ENCODE measurements at regions of chr12 and their contacts with region 1.

Region 1: GRCh38 chr12:91811481-91812287 is 334.0 kb downstream of the BTG1 start:
- DNase-seq: peak; percentile 64 to 73 (median 67)
- H3K4me3 ChIP-seq: no peak overlapping the region
- H3K4me3 Mint-ChIP-seq: peak overlapping the region in 5 of 8 donors; percentile 2 to 57 (median 44)
- H3K27ac ChIP-seq: no peak overlapping the region
- H3K27ac Mint-ChIP-seq: peak overlapping the region; percentile 7 to 92 (median 84)
- H3K4me1 ChIP-seq: peaks cover 8% of the 10 kb centered on the region
- H3K4me1 Mint-ChIP-seq: peaks cover 4 to 13% (median 12%) of the 10 kb centered on the region in 4 donors
- H3K27me3 ChIP-seq: no peaks in the 10 kb centered on the region
- H3K27me3 Mint-ChIP-seq: no peaks in the 10 kb centered on the region

Region 2: GRCh38 chr12:91603060-91603459 is 208.6 kb before region 1 on chr12:
- CTCF ChIA-PET with region 1: no interaction called
- POLR2A ChIA-PET with region 1: no interaction called
- intact Hi-C with region 1: no loop called
- DNase-seq: no peak
- H3K4me3 ChIP-seq: no peak overlapping the region
- H3K4me3 Mint-ChIP-seq: no peak overlapping the region
- H3K27ac ChIP-seq: no peak overlapping the region
- H3K27ac Mint-ChIP-seq: no peak overlapping the region
- H3K4me1 ChIP-seq: no peaks in the 10 kb centered on the region
- H3K4me1 Mint-ChIP-seq: peaks cover 0 to 2% (median 0%) of the 10 kb centered on the region in 4 donors
- H3K27me3 ChIP-seq: no peaks in the 10 kb centered on the region
- H3K27me3 Mint-ChIP-seq: peaks cover 0 to 3% of the 10 kb centered on the region in 2 donors

Region 3: GRCh38 chr12:91640021-91640420 is 171.7 kb before region 1 on chr12:
- CTCF ChIA-PET with region 1: no interaction called
- POLR2A ChIA-PET with region 1: no interaction called
- intact Hi-C with region 1: no loop called
- DNase-seq: no peak
- H3K4me3 ChIP-seq: no peak overlapping the region
- H3K4me3 Mint-ChIP-seq: no peak overlapping the region
- H3K27ac ChIP-seq: no peak overlapping the region
- H3K27ac Mint-ChIP-seq: no peak overlapping the region
- H3K4me1 ChIP-seq: no peaks in the 10 kb centered on the region
- H3K4me1 Mint-ChIP-seq: no peaks in the 10 kb centered on the region
- H3K27me3 ChIP-seq: no peaks in the 10 kb centered on the region
- H3K27me3 Mint-ChIP-seq: peaks cover 0 to 1% of the 10 kb centered on the region in 2 donors

Region 4: DNA sequence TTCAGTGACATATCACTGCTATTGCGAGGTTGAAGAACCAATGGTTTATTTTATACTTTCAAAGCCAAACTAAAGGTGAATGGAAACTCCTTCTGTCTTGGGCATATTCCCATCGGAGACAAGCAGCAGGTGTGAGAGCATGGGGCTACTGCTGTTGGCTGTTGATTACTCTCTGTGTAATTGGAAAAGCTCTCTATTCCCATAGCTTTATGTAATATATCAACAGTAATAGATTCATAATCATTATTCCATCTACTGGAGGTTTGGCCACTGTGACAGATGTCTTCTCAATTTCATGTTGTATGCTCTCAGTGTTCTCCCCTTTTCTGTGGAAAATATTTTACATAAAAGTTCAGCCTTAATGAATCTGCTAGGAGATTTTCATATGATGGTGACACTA is 18.0 kb before region 1 on chr12:
- CTCF ChIA-PET with region 1: interaction called, 22 read pairs
- POLR2A ChIA-PET with region 1: no interaction called
- intact Hi-C with region 1: no loop called
- DNase-seq: no peak
- H3K4me3 ChIP-seq: no peak overlapping the region
- H3K4me3 Mint-ChIP-seq: no peak overlapping the region
- H3K27ac ChIP-seq: no peak overlapping the region
- H3K27ac Mint-ChIP-seq: no peak overlapping the region
- H3K4me1 ChIP-seq: no peaks in the 10 kb centered on the region
- H3K4me1 Mint-ChIP-seq: peaks cover 0 to 1% (median 0%) of the 10 kb centered on the region in 4 donors
- H3K27me3 ChIP-seq: no peaks in the 10 kb centered on the region
- H3K27me3 Mint-ChIP-seq: no peaks in the 10 kb centered on the region

Region 5: DNA sequence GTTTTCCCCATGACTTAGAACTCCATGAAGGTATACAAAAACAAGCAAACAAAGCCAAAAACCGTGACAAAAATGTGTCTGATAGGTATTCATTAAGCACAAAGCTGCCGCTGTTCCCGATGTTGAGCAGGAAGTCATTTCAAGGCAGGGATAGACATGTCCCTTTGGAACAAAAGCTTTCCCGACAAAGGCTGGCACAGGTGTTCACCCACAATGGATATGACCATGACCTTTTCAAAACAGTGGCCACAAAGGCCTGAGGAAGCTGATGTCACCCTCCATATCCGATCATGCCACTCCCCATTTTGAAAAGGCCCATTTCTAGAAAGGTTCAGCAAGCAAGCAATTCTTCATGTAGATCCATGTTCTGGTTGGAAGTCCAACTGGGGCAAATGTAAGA is 54.9 kb after region 1 on chr12:
- CTCF ChIA-PET with region 1: interaction called, 14 read pairs
- POLR2A ChIA-PET with region 1: interaction called, 8 read pairs
- intact Hi-C with region 1: no loop called
- DNase-seq: no peak
- H3K4me3 ChIP-seq: no peak overlapping the region
- H3K4me3 Mint-ChIP-seq: no peak overlapping the region
- H3K27ac ChIP-seq: no peak overlapping the region
- H3K27ac Mint-ChIP-seq: peak overlapping the region in 1 of 7 donors; percentile 30
- H3K4me1 ChIP-seq: peaks cover 21% of the 10 kb centered on the region
- H3K4me1 Mint-ChIP-seq: peaks cover 19 to 47% (median 33%) of the 10 kb centered on the region in 4 donors
- H3K27me3 ChIP-seq: no peaks in the 10 kb centered on the region
- H3K27me3 Mint-ChIP-seq: no peaks in the 10 kb centered on the region

Region 6: DNA sequence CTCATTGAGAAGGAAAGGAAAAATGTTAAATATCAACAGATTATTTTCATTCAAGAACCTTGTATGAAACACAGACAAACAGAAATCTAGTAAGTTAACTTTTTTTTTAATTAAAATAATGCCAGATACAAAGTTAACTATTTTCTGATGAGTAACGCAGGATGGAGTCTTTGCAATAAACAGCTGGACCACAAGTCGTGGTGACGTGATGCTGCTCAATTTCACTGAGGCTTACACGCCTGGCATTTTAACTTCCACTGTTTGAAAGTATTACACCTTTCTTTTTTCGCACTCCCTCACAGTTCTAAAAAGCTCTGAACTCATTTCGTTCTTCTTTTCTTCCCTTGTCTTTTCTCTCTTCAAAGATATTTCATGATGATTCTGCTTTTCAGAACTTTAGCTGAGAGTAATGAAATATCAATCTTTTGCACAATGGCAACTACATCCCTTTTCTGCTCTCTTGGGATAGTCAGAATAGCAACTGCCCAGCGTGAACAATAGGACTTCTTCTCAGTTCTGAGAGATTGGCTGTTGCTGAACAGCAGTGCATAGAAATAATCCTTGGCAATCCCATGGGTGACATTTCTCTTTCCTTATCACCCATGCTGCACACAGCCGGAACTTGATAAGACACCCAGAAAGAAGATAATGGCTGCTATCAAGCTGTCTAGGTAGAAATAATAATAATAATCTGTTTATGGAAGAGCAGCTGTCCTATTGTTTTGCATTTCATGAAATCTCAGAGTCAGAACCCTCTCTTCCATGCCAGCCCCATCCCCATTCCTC is 173.5 kb after region 1 on chr12:
- CTCF ChIA-PET with region 1: interaction called, 16 read pairs
- POLR2A ChIA-PET with region 1: interaction called, 7 read pairs
- intact Hi-C with region 1: loop called (anchors 5 kb)
- DNase-seq: no peak
- H3K4me3 ChIP-seq: no peak overlapping the region
- H3K4me3 Mint-ChIP-seq: no peak overlapping the region
- H3K27ac ChIP-seq: no peak overlapping the region
- H3K27ac Mint-ChIP-seq: peak overlapping the region in 2 of 7 donors; percentile 34 to 47
- H3K4me1 ChIP-seq: peaks cover 17% of the 10 kb centered on the region
- H3K4me1 Mint-ChIP-seq: peaks cover 17 to 36% (median 24%) of the 10 kb centered on the region in 4 donors
- H3K27me3 ChIP-seq: no peaks in the 10 kb centered on the region
- H3K27me3 Mint-ChIP-seq: no peaks in the 10 kb centered on the region

Region 7: DNA sequence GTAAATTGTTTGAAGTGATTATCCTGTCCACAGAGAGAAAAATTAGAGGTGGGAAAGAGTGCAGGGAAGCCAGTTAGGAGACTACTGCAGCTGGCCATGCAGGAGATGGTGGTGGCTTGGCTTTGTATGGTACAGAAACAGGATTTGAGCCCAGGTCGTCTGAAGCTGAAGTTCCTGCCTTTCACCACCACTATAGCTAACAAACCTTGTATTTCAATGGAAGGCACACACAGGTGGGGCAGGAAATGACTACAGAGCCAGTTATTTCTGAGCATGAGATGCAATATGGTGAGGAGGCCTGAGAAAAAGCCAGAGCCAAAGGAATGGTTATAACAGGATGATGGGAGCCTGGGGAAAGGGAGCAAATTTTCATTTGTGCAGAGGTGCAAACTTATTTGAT is 230.1 kb after region 1 on chr12:
- CTCF ChIA-PET with region 1: interaction called, 14 read pairs
- POLR2A ChIA-PET with region 1: no interaction called
- intact Hi-C with region 1: no loop called
- DNase-seq: peak; percentile 42 to 58 (median 48)
- H3K4me3 ChIP-seq: no peak overlapping the region
- H3K4me3 Mint-ChIP-seq: peak overlapping the region in 7 of 8 donors; percentile 14 to 84 (median 64)
- H3K27ac ChIP-seq: no peak overlapping the region
- H3K27ac Mint-ChIP-seq: peak overlapping the region; percentile 54 to 90 (median 82)
- H3K4me1 ChIP-seq: peaks cover 69% of the 10 kb centered on the region
- H3K4me1 Mint-ChIP-seq: peaks cover 46 to 87% (median 63%) of the 10 kb centered on the region in 4 donors
- H3K27me3 ChIP-seq: no peaks in the 10 kb centered on the region
- H3K27me3 Mint-ChIP-seq: no peaks in the 10 kb centered on the region

Region 8: DNA sequence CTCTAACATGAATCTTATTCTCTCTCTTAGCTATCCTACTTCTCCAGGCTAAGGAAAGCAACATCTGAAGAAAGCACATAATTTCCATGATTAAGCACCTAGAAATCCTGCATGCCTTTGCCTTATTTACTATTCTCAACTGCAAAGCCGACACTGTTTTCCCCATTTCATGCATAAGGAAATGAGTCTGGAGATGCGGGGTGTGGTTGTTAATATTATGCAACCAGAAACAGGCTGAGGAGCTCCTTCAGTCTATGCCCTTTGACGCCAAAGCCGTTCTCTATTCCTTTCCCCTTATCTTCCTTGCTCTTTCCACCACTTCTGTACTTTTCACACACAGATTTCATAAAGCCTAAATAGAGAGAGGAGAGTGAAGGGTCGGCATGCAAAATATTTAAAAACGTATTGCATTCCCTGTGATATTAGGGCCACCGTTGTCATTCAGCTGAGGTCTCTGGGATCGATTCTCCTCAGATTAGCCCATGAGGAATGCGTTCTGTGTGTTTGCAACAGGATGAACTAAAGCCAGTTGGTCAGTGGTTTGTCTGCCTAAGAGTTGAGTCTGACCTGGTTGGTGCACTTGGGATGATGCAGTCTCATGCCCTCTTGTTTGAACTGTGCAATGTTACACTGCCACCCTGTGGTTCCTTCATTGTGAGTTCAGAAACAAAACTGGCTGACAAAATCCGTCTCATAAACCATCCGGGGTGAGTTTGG is 838.0 kb after region 1 on chr12:
- CTCF ChIA-PET with region 1: interaction called, 14 read pairs
- POLR2A ChIA-PET with region 1: no interaction called
- intact Hi-C with region 1: no loop called
- DNase-seq: peak; percentile 55 to 68 (median 59)
- H3K4me3 ChIP-seq: no peak overlapping the region
- H3K4me3 Mint-ChIP-seq: no peak overlapping the region
- H3K27ac ChIP-seq: no peak overlapping the region
- H3K27ac Mint-ChIP-seq: peak overlapping the region in 5 of 7 donors; percentile 31 to 74 (median 46)
- H3K4me1 ChIP-seq: no peaks in the 10 kb centered on the region
- H3K4me1 Mint-ChIP-seq: peaks cover 0 to 6% (median 4%) of the 10 kb centered on the region in 4 donors
- H3K27me3 ChIP-seq: no peaks in the 10 kb centered on the region
- H3K27me3 Mint-ChIP-seq: peaks cover 0 to 2% of the 10 kb centered on the region in 2 donors